Gastrocnemius medialis (tissue), 4 donors: ENCODE measurements at regions of chr17 and their contacts with region 1.

Region 1: DNA sequence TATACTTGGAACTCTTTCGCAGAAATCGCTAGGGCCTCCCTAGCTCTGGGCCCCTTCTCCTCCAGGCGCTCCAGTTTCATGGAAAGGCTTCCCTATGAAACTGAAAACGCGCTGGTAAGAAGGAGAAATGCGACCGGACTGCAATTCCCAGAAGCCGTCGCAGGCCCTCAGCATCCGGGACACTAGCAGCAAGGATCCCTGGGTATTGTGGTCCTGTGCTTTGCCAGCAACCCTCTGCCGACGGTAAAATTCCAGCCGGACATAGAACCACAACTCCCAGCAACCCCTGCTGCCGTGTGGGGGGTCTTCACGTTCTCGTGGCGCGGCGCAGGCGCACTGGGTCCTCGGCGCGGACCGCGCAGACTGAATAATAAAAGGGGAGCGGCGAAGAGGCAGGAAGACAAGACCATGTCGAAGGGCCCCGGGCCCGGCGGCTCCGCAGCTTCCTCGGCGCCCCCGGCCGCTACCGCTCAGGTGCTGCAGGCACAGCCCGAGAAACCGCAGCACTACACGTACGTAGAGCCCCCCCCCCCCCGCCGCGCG is at the start of gene UNK:
- DNase-seq: peak; percentile 98 to 99
- ATAC-seq: peak; percentile 82 to 85
- H3K4me3 ChIP-seq: peak within 1 kb of the TSS; percentile 74 to 87 (median 86)
- H3K27ac ChIP-seq: peak within 1 kb of the TSS; percentile 98 to 100 (median 100)
- H3K4me1 ChIP-seq: peaks cover 41 to 47% of the 10 kb centered on the region in 2 donors
- H3K27me3 ChIP-seq: no peaks in the 10 kb centered on the region
- CTCF ChIP-seq: peak in 2 of 5 experiments; percentile 15 to 43
- POLR2A ChIP-seq: peak; percentile 56 to 67
- total RNA-seq, gene UNK: 10.4 to 19.2 (median 13.1) TPM

Region 2: GRCh38 chr17:75535119-75535537 is 249.4 kb before region 1 on chr17:
- in situ Hi-C with region 1: no loop called
- intact Hi-C with region 1: no loop called
- DNase-seq: no peak
- ATAC-seq: no peak
- H3K4me3 ChIP-seq: no peak overlapping the region
- H3K27ac ChIP-seq: no peak overlapping the region
- H3K4me1 ChIP-seq: no peaks in the 10 kb centered on the region
- H3K27me3 ChIP-seq: no peaks in the 10 kb centered on the region
- CTCF ChIP-seq: no peak
- POLR2A ChIP-seq: no peak

Region 3: GRCh38 chr17:75764711-75765421 is 19.7 kb before region 1 on chr17 and contains the start of gene GALK1:
- in situ Hi-C with region 1: no loop called
- intact Hi-C with region 1: no loop called
- DNase-seq: peak; percentile 47 to 59
- ATAC-seq: peak; percentile 80
- H3K4me3 ChIP-seq: peak within 1 kb of the TSS; percentile 58 to 83 (median 72)
- H3K27ac ChIP-seq: peak within 1 kb of the TSS; percentile 54 to 81 (median 74)
- H3K4me1 ChIP-seq: peaks cover 6 to 14% of the 10 kb centered on the region in 2 donors
- H3K27me3 ChIP-seq: no peaks in the 10 kb centered on the region
- CTCF ChIP-seq: peak; percentile 13 to 81 (median 69)
- POLR2A ChIP-seq: peak; percentile 30 to 59
- total RNA-seq, gene GALK1: 8.7 to 18.3 (median 11.0) TPM

Region 4: DNA sequence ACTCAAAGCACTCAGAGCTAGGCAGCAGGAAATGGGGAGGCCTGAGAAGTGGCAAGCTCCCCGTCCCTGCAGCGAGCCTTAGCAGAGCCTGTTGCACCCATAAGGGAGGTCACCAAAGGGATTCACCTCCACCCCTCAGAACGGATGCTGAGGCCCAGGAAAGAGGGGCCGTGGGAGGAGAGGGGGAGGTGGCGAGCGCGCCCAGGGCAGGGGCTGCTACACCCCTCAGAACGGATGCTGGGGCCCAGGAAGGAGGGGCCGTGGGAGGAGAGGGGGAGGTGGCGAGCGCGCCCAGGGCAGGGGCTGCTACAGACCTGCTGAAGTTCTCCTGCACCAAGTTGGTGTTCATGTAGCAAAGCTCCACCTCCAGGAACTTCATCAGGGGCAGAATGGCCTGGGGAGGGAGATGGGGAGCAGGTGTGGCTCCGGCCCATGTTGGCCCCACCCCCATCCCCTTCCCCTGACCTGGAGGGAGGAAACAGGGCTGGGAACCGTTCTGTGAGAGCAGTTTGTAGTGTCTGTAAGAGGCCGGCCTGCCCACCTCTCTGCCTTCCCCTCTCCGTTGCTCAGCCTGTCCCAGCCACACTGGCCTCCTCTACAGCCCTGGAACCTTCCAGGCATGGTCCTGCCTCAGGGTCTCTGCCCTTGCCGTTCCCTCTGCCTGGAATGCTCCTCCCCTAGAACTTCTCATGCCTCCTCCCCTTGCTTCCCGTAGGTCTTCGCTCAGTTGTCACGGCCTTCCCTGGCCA is 48.3 kb after region 1 on chr17:
- in situ Hi-C with region 1: no loop called
- intact Hi-C with region 1: no loop called
- DNase-seq: no peak
- ATAC-seq: no peak
- H3K4me3 ChIP-seq: no peak overlapping the region
- H3K27ac ChIP-seq: no peak overlapping the region
- H3K4me1 ChIP-seq: peaks cover 3 to 6% of the 10 kb centered on the region in 2 donors
- H3K27me3 ChIP-seq: no peaks in the 10 kb centered on the region
- CTCF ChIP-seq: no peak
- POLR2A ChIP-seq: no peak

Region 5: GRCh38 chr17:75845049-75845860 is 60.7 kb after region 1 on chr17:
- in situ Hi-C with region 1: no loop called
- intact Hi-C with region 1: loop called (anchors 2 kb)
- DNase-seq: peak; percentile 94 to 98
- ATAC-seq: peak; percentile 82 to 88
- H3K4me3 ChIP-seq: peak overlapping the region in 1 of 4 donors; percentile 8
- H3K27ac ChIP-seq: peak overlapping the region; percentile 95 to 99 (median 95)
- H3K4me1 ChIP-seq: peaks cover 49 to 50% of the 10 kb centered on the region in 2 donors
- H3K27me3 ChIP-seq: no peaks in the 10 kb centered on the region
- CTCF ChIP-seq: peak; percentile 91 to 98 (median 95)
- POLR2A ChIP-seq: peak; percentile 45 to 50

Region 6: DNA sequence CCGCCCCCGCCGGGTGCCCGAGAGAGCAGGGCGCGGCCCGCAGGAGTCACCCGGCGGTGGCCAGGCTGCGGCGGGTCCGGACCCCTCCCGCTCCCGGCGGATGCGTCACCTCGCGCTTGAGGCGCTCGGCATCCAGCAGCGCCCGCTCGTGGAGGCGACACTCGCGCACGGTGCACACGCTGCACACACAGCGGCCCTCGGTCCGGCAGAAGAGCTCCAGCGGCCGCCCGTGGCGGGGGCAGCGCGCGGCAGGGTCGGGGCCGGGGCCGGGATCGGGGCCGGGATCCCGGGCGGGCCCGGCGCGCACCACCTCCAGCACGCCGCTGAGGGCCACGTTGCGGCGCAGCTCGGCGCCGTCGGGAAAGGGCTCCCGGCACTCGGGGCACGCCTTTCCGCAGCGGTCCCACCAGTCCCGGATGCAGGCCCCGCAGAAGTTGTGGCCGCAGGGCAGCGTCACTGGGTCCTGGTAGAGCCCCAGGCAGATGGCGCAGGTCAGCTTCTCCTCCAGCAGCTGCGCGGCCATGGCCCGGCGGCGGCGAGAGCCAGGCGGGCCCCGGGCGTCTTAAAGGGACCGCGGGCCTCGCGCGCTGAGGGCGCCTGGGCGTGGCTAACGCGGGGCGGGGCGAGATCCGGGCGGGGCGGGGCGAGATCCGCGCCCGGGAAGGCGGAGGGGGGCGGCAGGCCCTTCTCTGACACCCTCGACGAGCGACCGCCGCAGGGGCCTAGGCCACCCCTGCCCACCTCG is 112.0 kb after region 1 on chr17 and contains the start of gene TRIM65:
- in situ Hi-C with region 1: no loop called
- intact Hi-C with region 1: loop called (anchors 5 kb)
- DNase-seq: peak; percentile 76 to 82
- ATAC-seq: peak; percentile 85 to 86
- H3K4me3 ChIP-seq: peak within 1 kb of the TSS; percentile 60 to 72 (median 64)
- H3K27ac ChIP-seq: peak within 1 kb of the TSS; percentile 80 to 96 (median 92)
- H3K4me1 ChIP-seq: peaks cover 16 to 28% of the 10 kb centered on the region in 2 donors
- H3K27me3 ChIP-seq: no peaks in the 10 kb centered on the region
- CTCF ChIP-seq: peak in 4 of 5 experiments; percentile 19 to 65 (median 50)
- POLR2A ChIP-seq: peak; percentile 80 to 81
- total RNA-seq, gene TRIM65: 16.5 to 26.1 (median 22.3) TPM

Region 7: DNA sequence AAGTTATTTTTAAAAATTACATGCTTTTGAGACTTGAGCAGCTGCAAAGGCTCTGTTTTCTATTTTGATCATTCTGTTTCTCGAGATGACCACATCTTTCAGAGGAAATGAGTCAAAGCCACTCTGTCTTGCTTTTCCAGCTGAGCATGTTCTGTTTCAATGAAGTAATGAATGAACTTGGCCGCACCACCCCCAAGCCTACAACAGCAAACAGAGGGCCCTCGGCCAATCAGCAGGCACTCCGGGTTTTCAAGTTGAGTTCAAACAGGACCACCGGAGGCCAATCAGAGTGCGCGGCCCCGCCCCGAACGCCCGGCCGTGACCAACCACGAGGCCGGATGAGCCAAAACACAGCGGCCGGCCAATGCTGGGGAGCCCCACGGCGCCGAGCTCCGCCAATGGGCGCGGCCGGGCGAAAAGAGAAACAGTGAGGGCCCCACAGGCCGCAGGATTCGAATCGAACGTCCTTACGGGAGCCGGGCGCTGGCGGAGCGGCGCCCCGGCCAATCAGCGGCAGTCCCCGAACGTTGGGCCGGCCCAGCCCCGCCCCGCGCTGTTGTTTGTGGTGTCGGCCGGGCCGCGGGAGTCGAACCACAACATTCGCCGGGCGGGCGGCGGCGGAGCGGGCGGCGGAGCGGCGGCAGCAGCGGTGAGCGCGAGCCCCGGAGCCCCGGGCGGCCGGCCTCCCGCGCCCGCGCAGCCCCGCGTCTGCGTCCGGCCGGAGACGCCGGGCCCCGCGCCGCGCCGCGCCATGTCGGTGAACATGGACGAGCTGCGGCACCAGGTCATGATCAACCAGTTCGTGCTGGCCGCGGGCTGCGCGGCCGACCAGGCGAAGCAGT is 480.4 kb after region 1 on chr17 and contains the start of gene UBALD2:
- in situ Hi-C with region 1: no loop called
- intact Hi-C with region 1: loop called (anchors 10 kb)
- DNase-seq: peak; percentile 99 to 100
- ATAC-seq: peak; percentile 78 to 79
- H3K4me3 ChIP-seq: peak within 1 kb of the TSS; percentile 66 to 89 (median 80)
- H3K27ac ChIP-seq: peak within 1 kb of the TSS; percentile 90 to 98 (median 95)
- H3K4me1 ChIP-seq: peaks cover 52 to 58% of the 10 kb centered on the region in 2 donors
- H3K27me3 ChIP-seq: no peaks in the 10 kb centered on the region
- CTCF ChIP-seq: peak in 1 of 5 experiments; percentile 27
- POLR2A ChIP-seq: peak; percentile 96 to 98
- total RNA-seq, gene UBALD2: 28.9 to 151 (median 52.2) TPM